GM12878 (cell line): ENCODE measurements at regions of chr1 and their contacts with region 1.

Region 1: GRCh38 chr1:160768295-160768657 is 27.7 kb upstream of the LY9 start:
- DNase-seq: peak; percentile 84
- ATAC-seq: peak; percentile 94
- H3K4me3 ChIP-seq: peak overlapping the region; percentile 59
- H3K27ac ChIP-seq: peak overlapping the region; percentile 89
- H3K4me1 ChIP-seq: peaks cover 23% of the 10 kb centered on the region
- H3K27me3 ChIP-seq: no peaks in the 10 kb centered on the region
- CTCF ChIP-seq: peak; percentile 90 to 97 (median 91)
- EP300 ChIP-seq: no peak
- POLR2A ChIP-seq: no peak; the same call in 1 of the 2 replicates
- RAD21 ChIP-seq: peak; percentile 96

Region 2: DNA sequence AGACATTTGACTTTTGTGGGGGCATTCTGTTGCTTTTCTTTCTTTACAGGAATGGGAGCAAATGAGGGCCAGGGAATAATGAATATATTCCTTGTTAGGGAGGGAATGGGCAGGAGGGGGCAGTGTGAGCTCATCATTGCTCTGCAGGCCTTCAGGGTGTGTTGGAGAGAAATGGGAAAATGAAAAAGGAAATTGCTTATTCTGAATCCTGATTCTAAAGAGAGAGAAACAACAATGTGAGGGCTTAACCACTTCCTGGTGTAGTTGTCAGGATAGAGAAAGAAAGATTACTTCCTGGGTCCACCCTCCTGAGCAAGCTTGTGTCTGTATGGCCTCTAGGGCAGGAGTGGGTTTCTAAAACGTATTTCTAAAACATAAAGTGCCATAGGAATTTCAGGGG is 339.6 kb before region 1 on chr1:
- CTCF ChIA-PET with region 1: interaction called, 5 read pairs
- POLR2A ChIA-PET with region 1: no interaction called
- RAD21 ChIA-PET with region 1: interaction called, 12 read pairs
- SMC1A ChIA-PET with region 1: interaction called, 5 read pairs
- in situ Hi-C with region 1: no loop called
- intact Hi-C with region 1: no loop called
- DNase-seq: peak; percentile 81
- ATAC-seq: peak; percentile 54
- H3K4me3 ChIP-seq: no peak overlapping the region
- H3K27ac ChIP-seq: peak overlapping the region; percentile 100
- H3K4me1 ChIP-seq: peaks cover 52% of the 10 kb centered on the region
- H3K27me3 ChIP-seq: no peaks in the 10 kb centered on the region
- CTCF ChIP-seq: peak; percentile 58 to 90 (median 58); a peak in 5 of 6 replicates
- EP300 ChIP-seq: no peak
- POLR2A ChIP-seq: no peak
- RAD21 ChIP-seq: peak; percentile 98

Region 3: DNA sequence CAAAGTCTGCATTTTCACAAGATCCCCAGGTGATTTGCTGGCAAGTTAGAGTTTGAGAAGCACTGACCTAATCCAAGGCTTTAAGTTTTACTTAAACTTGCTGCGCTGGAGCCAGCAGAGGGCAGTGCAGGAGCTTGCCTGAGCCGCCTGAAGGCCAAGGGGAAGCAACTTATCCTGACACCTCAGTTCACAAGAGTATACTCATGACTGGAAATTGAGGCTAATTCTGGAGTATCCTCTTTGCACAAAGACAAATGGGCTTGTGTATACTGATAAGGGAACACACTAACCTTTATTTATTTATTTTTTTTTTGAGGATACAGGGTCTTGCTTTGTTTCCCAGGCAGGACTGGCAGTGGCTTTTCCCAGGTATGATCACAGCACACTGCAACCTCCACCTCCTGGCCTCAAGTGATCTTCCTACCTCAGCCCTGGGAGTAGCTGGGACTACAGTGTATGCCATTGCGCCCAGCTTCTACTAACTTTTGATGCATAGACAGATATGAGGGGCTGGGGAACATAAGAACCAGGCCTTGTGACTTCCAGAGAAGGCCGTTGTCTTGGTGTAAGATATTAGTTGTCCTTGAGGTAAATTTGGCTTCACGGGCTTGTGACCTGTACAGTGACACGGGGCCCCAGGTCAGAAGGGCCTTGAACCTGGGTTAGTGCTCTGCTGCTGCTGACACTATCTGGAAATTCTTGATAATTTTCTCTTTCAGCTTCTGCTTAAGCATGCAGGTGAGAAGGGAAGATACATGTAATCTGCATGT is 92.5 kb before region 1 on chr1:
- CTCF ChIA-PET with region 1: interaction called, 76 read pairs
- POLR2A ChIA-PET with region 1: interaction called, 9 read pairs
- RAD21 ChIA-PET with region 1: interaction called, 45 read pairs
- SMC1A ChIA-PET with region 1: interaction called, 54 read pairs
- in situ Hi-C with region 1: loop called (anchors 5 kb)
- intact Hi-C with region 1: loop called (anchors 1 kb)
- DNase-seq: peak; percentile 76
- ATAC-seq: peak; percentile 88
- H3K4me3 ChIP-seq: peak overlapping the region; percentile 2; the same call in 1 of the 2 replicates
- H3K27ac ChIP-seq: peak overlapping the region; percentile 62
- H3K4me1 ChIP-seq: peaks cover 48% of the 10 kb centered on the region
- H3K27me3 ChIP-seq: no peaks in the 10 kb centered on the region
- CTCF ChIP-seq: peak; percentile 86 to 95 (median 92)
- EP300 ChIP-seq: peak in 1 of 2 experiments; percentile 10; a peak in 1 of 4 replicates
- POLR2A ChIP-seq: peak; percentile 31; the same call in 1 of the 2 replicates
- RAD21 ChIP-seq: peak; percentile 87

Region 4: DNA sequence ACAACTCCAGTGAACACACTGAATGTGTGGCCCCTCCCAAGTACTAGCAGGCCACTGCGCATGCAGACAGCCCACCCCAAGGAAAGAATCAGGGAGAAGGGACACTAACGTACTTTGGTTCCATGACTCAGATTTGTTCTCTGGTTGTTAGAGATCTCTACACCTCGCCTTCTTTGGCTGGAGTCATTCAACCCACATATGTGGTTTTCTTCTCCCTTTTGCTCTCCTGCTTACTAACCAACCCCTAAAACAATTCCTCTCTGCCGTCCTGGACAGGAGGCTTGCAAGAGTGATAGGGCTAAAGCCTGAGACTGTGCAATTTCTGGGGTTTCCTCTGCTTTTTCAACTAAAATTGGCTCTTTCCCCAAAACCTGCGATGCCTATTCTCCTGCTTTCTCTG is 51.0 kb before region 1 on chr1:
- CTCF ChIA-PET with region 1: interaction called, 209 read pairs
- POLR2A ChIA-PET with region 1: interaction called, 12 read pairs
- RAD21 ChIA-PET with region 1: interaction called, 52 read pairs
- SMC1A ChIA-PET with region 1: interaction called, 301 read pairs
- in situ Hi-C with region 1: no loop called
- intact Hi-C with region 1: no loop called
- DNase-seq: no peak
- ATAC-seq: no peak
- H3K4me3 ChIP-seq: no peak overlapping the region
- H3K27ac ChIP-seq: no peak overlapping the region
- H3K4me1 ChIP-seq: peaks cover 14% of the 10 kb centered on the region
- H3K27me3 ChIP-seq: no peaks in the 10 kb centered on the region
- CTCF ChIP-seq: no peak
- EP300 ChIP-seq: no peak
- POLR2A ChIP-seq: no peak
- RAD21 ChIP-seq: no peak

Region 5: GRCh38 chr1:160739098-160739511 is 29.2 kb before region 1 on chr1 and contains the start of gene SLAMF7:
- CTCF ChIA-PET with region 1: interaction called, 234 read pairs
- POLR2A ChIA-PET with region 1: interaction called, 33 read pairs
- RAD21 ChIA-PET with region 1: interaction called, 151 read pairs
- SMC1A ChIA-PET with region 1: interaction called, 447 read pairs
- in situ Hi-C with region 1: no loop called
- intact Hi-C with region 1: loop called (anchors 1 kb)
- DNase-seq: peak; percentile 81
- ATAC-seq: peak; percentile 72
- H3K4me3 ChIP-seq: peak within 1 kb of the TSS; percentile 99
- H3K27ac ChIP-seq: peak within 1 kb of the TSS; percentile 78
- H3K4me1 ChIP-seq: peaks cover 34% of the 10 kb centered on the region
- H3K27me3 ChIP-seq: no peaks in the 10 kb centered on the region
- CTCF ChIP-seq: no peak
- EP300 ChIP-seq: peak; percentile 38 to 45; a peak in 2 of 4 replicates
- POLR2A ChIP-seq: peak; percentile 88
- RAD21 ChIP-seq: no peak
- polyA plus RNA-seq, gene SLAMF7: 66.6 to 83.4 TPM

Region 6: GRCh38 chr1:160789702-160790611 is 21.7 kb after region 1 on chr1:
- CTCF ChIA-PET with region 1: interaction called, 192 read pairs
- POLR2A ChIA-PET with region 1: interaction called, 5 read pairs
- RAD21 ChIA-PET with region 1: interaction called, 49 read pairs
- SMC1A ChIA-PET with region 1: interaction called, 86 read pairs
- in situ Hi-C with region 1: no loop called
- intact Hi-C with region 1: no loop called
- DNase-seq: peak; percentile 89
- ATAC-seq: peak; percentile 91
- H3K4me3 ChIP-seq: no peak overlapping the region; the same call in 1 of the 2 replicates
- H3K27ac ChIP-seq: peak overlapping the region; percentile 86
- H3K4me1 ChIP-seq: peaks cover 19% of the 10 kb centered on the region
- H3K27me3 ChIP-seq: no peaks in the 10 kb centered on the region
- CTCF ChIP-seq: no peak
- EP300 ChIP-seq: peak; percentile 96 to 99
- POLR2A ChIP-seq: no peak
- RAD21 ChIP-seq: no peak

Region 7: GRCh38 chr1:160862203-160863060 is 94.2 kb after region 1 on chr1 and contains the start of gene CD244:
- CTCF ChIA-PET with region 1: interaction called, 10 read pairs
- POLR2A ChIA-PET with region 1: interaction called, 3 read pairs
- RAD21 ChIA-PET with region 1: interaction called, 10 read pairs
- SMC1A ChIA-PET with region 1: interaction called, 4 read pairs
- in situ Hi-C with region 1: no loop called
- intact Hi-C with region 1: no loop called
- DNase-seq: peak; percentile 71
- ATAC-seq: peak; percentile 96
- H3K4me3 ChIP-seq: peak within 1 kb of the TSS; percentile 32; the same call in 1 of the 2 replicates
- H3K27ac ChIP-seq: no peak within 1 kb of the TSS
- H3K4me1 ChIP-seq: peaks cover 15% of the 10 kb centered on the region
- H3K27me3 ChIP-seq: no peaks in the 10 kb centered on the region
- CTCF ChIP-seq: no peak
- EP300 ChIP-seq: peak in 1 of 2 experiments; percentile 60; a peak in 1 of 4 replicates
- POLR2A ChIP-seq: peak; percentile 56
- RAD21 ChIP-seq: no peak
- polyA plus RNA-seq, gene CD244: 0.24 to 0.37 TPM

Region 8: DNA sequence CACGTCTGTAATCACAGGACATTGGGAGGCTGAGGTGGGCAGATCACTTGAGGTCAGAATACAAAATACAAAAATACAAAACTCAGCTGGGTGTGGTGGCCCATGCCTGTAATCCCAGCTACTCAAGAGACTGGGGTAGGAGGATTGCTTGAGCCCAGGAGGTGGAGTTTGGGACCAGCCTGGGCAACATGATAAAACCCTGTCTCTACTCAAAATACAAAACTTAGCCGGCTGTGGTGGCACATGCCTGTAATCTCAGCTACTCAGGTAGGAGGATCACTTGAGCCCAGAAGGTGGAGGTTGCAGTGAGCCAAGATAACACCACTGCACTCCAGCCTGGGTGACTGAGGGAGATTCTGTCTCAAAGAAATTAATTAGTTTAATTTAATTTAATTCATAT is 123.2 kb after region 1 on chr1:
- CTCF ChIA-PET with region 1: no interaction called
- POLR2A ChIA-PET with region 1: no interaction called
- RAD21 ChIA-PET with region 1: no interaction called
- SMC1A ChIA-PET with region 1: no interaction called
- in situ Hi-C with region 1: no loop called
- intact Hi-C with region 1: no loop called
- DNase-seq: no peak
- ATAC-seq: no peak
- H3K4me3 ChIP-seq: no peak overlapping the region
- H3K27ac ChIP-seq: no peak overlapping the region
- H3K4me1 ChIP-seq: no peaks in the 10 kb centered on the region
- H3K27me3 ChIP-seq: no peaks in the 10 kb centered on the region
- CTCF ChIP-seq: no peak
- EP300 ChIP-seq: no peak
- POLR2A ChIP-seq: no peak
- RAD21 ChIP-seq: no peak